GM18951 (cell line): ENCODE measurements at regions of chr18 and their contacts with region 1.

Region 1: DNA sequence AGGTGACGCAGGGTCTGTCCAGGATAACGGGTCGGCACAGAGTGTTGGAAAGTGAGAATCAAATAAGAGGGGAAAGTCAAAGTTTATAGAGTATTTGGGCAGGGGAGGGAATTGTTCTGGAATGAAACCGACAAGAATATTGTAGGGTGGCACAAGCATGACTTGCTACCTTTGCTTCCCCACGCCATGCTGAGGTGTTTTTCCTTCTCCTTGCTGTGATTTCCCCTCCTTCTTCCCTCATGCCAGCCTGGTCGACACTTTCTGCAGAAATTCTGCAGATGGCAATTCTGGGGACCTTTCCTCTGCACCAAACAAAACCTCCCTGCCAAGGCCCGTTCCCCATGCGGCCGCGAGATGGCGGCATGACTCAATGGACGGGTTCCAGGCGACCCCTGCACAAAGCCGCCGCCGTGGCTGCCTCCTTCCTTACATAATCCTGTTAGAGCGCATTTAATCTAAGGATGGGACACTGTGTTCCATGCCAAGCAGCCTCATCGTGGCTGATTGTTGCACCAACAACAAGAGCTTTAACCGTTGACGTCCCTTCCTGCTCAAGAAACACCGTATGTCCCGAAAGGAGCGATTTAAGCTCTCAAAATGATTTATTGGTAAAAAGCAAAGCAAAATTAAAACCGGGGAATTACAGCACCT is at the start of gene MRO:
- POLR2A ChIP-seq: no peak

Region 2: DNA sequence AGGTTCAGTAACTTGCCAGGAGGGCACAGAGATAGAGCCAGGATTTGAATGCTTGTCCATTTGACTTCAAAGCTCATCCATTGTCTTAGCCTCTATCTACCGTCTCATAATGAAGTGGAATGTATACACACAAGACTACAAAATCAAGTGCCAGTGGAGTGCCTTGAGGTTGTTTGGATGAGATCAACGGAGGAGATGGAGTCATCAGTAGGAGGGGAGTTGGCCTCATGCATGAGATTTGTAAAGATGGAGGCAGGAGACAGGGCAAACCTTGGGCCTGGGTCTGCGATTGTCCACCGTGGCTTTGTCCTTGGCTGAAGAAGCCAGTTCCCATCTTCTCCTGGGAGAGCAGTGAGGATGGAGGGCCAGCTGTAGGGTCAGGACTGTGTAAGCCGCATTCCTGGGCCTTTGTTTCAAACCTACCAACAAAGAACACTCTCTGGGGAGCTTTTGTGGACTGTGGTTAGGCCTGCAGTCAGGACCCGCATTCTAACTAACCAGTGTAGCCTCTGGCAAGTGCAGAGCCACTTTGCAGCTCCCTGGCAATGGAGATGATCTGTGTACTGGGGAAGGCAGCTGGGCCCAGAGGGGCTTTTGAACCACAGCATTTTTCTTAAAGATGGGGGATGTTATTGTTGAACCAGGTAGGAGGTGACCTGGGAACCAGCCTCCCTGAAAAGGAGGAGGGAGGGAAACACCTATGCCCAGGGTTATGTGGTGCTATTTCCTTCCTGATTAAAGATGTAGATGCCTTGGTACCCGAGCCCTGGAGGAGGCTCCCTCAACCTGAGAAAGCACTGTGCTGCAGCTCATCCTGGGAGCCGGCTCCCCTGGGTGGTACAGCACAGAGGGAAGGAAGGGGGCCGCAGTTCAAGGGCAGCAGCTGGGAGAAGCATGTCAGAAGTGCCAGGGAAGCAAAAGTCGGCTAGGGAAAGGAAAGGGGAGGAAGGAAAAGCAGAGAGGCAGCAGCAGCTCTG is 197.3 kb after region 1 on chr18:
- in situ Hi-C with region 1: no loop called
- POLR2A ChIP-seq: no peak

Region 3: DNA sequence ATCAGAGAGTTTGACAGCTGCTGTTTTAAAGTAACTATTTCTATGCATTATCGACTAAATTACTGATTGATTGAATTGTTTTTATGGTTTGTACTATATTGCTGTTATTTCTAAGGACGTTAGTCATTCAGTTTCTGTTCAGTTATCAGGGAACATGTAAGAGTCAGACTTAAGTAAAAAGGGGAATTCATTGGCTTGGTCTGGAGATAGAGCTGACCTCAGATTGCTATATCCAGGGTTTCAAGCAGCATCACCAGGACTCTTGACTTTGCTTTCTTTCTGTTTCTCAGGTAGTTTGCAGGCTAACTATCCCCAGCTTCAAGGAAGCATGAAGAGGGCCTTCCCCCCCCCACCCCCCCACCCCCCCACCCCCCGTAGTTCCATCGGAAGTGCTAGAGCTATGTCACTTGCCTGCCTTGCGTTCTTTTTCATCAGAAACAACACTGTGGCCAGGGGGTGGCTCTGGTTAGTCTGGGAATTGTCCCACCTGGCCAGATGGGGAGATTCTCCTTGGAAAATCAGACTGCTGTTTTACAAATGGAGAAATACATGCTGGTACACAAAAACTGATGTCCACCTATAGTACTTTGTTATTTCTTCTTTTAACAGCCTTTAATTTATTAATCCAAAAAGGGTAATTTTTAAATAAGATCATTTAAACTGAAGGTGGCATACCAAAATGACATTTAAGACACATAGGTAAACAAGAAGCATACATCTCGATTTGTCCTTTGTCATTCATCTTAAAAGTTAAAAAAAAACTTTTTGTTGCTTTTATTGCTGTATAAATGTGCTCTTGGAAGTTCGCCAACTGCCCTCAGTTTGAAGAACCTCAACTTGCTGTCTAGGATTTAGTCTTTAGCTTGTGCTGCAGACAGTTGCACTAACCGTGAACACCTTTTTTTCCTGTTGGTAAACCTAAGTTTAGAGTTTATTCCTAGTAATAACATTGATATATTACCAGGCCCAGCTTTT is 219.6 kb after region 1 on chr18:
- in situ Hi-C with region 1: loop called (anchors 10 kb)
- POLR2A ChIP-seq: no peak

Region 4: DNA sequence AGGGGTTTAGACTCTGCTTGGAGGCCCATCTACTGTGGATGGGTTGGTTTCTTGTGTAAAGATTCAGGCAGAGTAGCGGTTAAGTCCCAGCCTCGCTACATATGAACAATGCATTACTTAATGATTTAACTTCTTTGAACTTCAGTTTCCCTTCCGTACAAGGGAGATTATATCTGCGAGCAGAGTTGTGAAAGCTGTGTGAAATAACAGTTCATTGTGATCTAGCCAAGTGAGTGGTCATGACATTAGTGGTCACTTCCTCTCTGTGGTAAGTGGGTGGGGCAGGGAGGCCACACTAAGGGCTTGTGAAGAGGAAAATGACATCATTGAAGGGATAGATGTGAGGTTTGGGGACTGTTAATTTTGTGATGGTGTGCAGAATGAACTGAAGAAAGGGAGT is 391.7 kb after region 1 on chr18:
- in situ Hi-C with region 1: no loop called
- POLR2A ChIP-seq: no peak